ENCODE measurements at regions of chr17 and their contacts with region 1.

Region 1: DNA sequence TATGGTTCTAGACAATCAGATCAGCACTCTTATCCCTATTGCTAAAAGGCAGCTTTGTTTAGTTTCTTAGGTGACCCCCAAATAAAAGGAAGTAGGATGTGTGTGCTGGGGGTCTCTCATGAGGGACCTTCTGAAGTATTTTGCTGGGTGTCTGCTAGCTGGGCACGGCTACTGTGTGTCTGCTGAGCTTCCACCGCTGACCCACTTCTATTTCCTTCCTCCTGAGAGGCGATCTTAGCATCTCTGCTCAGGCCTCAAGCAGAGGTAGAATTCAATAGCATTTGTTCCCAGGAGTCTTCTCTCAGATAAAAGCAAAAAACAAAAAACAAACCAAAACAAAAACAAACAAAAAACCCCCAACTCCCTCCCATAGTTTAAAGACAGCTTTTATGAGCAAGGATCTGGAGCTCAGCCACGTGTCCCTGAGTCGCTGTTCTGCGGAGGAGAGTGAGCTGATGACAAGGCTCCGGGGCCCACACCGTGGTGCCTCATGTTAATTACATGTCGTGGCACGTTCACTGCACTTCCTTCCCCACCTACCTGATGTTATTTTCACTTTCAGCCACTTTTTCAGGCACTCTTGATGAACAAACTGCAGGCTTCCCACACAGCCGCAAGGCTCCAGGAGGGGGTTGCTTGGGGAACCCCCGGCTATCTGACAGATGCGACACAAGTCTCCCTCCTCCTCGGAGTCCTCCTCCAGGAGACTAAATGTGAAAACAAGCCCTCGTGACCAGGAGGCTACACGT is 83.5 kb downstream of the MARCHF10 start:
- DNase-seq: peak; percentile 72 to 84 (median 78)
- H3K4me3 ChIP-seq: no peak overlapping the region
- H3K4me3 Mint-ChIP-seq: peak overlapping the region; percentile 74 to 87 (median 85)
- H3K27ac ChIP-seq: peak overlapping the region; percentile 61
- H3K27ac Mint-ChIP-seq: peak overlapping the region; percentile 87 to 100 (median 98)
- H3K4me1 ChIP-seq: peaks cover 29% of the 10 kb centered on the region
- H3K4me1 Mint-ChIP-seq: peaks cover 18 to 34% (median 28%) of the 10 kb centered on the region in 4 donors
- H3K27me3 ChIP-seq: peaks cover 3% of the 10 kb centered on the region
- H3K27me3 Mint-ChIP-seq: peaks cover 0 to 4% of the 10 kb centered on the region in 2 donors

Region 2: DNA sequence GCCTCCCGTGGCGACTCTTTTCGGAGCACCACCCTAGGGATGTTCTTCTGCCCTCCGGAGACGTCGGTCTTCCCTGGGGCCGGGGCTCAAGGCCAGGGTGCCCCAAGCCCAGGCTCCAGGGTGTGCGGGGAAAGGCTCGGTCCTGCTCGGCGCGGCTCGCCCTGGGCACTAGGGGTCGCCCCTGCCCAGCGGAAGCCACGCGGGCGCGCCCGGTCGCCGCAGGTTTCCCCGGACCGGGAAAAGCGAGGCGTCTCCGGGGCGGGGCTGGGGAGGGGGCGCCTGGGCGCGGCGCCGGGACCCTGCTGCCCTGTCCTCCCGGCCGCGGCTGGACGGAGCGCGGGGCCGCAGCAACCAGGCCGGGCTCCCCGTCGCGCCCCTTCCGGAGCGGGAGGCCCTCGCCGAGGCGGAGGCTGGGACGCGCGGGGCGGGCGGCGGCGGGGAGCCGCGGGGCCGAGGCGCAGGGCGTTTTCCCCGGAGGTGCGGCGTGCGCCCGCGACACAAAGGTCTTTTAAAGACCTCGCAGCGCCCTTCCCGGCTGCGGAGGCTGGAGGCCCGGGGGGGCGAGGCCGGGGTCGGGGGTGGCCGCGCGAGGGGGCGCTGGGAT is 20.7 kb before region 1 on chr17:
- CTCF ChIA-PET with region 1: interaction called, 7 read pairs
- POLR2A ChIA-PET with region 1: interaction called, 10 read pairs
- intact Hi-C with region 1: loop called (anchors 1 kb)
- DNase-seq: peak in 4 of 5 donors; percentile 69 to 82 (median 72)
- H3K4me3 ChIP-seq: peak overlapping the region in 1 of 2 donors; percentile 32
- H3K4me3 Mint-ChIP-seq: peak overlapping the region in 5 of 8 donors; percentile 20 to 49 (median 34)
- H3K27ac ChIP-seq: no peak overlapping the region
- H3K27ac Mint-ChIP-seq: peak overlapping the region in 1 of 7 donors; percentile 10
- H3K4me1 ChIP-seq: peaks cover 10% of the 10 kb centered on the region
- H3K4me1 Mint-ChIP-seq: peaks cover 3 to 19% (median 4%) of the 10 kb centered on the region in 4 donors
- H3K27me3 ChIP-seq: no peaks in the 10 kb centered on the region
- H3K27me3 Mint-ChIP-seq: peaks cover 3% of the 10 kb centered on the region in 2 donors

Region 3: GRCh38 chr17:62750631-62751358 is 26.2 kb after region 1 on chr17:
- CTCF ChIA-PET with region 1: no interaction called
- POLR2A ChIA-PET with region 1: no interaction called
- intact Hi-C with region 1: no loop called
- DNase-seq: no peak
- H3K4me3 ChIP-seq: no peak overlapping the region
- H3K4me3 Mint-ChIP-seq: no peak overlapping the region
- H3K27ac ChIP-seq: no peak overlapping the region
- H3K27ac Mint-ChIP-seq: no peak overlapping the region
- H3K4me1 ChIP-seq: no peaks in the 10 kb centered on the region
- H3K4me1 Mint-ChIP-seq: peaks cover 0 to 2% (median 0%) of the 10 kb centered on the region in 4 donors
- H3K27me3 ChIP-seq: no peaks in the 10 kb centered on the region
- H3K27me3 Mint-ChIP-seq: peaks cover 0 to 1% of the 10 kb centered on the region in 2 donors

Measured in CD4-positive, alpha-beta memory T cell (primary cell).